Heart left ventricle (tissue), 16 donors: ENCODE measurements at regions of chr7 and their contacts with region 1.

Region 1: GRCh38 chr7:77903597-77903996 is 105.0 kb downstream of the PHTF2 start:
- DNase-seq: peak in 2 of 5 donors; percentile 32 to 37
- ATAC-seq: peak in 1 of 4 donors; percentile 63
- H3K4me3 ChIP-seq: no peak overlapping the region
- H3K27ac ChIP-seq: peak overlapping the region in 1 of 12 donors; percentile 3
- H3K4me1 ChIP-seq: peaks cover 0 to 8% (median 0%) of the 10 kb centered on the region in 12 donors
- H3K27me3 ChIP-seq: no peaks in the 10 kb centered on the region
- CTCF ChIP-seq: peak in 3 of 12 donors; percentile 22 to 31 (median 26)
- POLR2A ChIP-seq: no peak

Region 2: DNA sequence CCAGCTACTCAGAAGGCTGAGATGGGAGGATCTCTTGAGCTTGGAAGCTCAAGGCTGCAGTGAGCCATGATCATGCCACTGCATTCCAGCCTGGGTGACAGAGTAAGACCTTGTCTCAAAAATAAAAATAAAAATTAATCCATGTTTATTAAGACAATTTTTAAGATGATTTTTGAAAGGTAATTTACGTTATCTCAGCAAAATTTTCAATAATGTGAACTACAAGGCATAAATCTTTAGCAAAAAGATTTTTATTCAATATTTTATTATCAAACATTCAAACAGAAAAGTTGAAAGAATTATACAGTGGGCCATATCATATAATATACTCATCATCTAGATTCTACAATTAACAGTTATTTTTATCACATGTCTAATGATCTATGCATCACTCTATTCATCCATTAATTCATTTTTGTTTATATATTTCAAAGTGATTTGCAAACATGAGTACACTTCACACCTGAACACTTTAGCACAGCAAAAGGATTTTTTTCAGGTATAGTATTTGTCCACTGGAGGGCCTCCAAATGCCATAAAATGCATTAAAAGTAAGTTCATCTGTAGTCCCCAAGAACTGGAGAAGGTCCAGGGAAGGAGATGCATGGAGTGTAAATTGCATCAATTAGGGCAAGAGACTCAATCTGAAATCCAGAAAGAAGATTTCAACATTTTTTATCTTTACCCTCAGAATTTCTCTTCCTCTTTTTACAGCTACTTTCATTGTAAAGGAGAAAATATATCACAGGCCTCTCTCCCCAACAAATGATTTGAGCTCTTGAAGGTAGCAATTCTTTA is 246.0 kb before region 1 on chr7:
- intact Hi-C with region 1: loop called in 1 of 10 experiments (anchors 10 kb)
- DNase-seq: no peak
- ATAC-seq: peak in 1 of 4 donors; percentile 32
- H3K4me3 ChIP-seq: no peak overlapping the region
- H3K27ac ChIP-seq: no peak overlapping the region
- H3K4me1 ChIP-seq: peaks cover 0 to 3% (median 0%) of the 10 kb centered on the region in 12 donors
- H3K27me3 ChIP-seq: no peaks in the 10 kb centered on the region
- CTCF ChIP-seq: peak; percentile 19 to 60 (median 46)
- POLR2A ChIP-seq: no peak

Region 3: DNA sequence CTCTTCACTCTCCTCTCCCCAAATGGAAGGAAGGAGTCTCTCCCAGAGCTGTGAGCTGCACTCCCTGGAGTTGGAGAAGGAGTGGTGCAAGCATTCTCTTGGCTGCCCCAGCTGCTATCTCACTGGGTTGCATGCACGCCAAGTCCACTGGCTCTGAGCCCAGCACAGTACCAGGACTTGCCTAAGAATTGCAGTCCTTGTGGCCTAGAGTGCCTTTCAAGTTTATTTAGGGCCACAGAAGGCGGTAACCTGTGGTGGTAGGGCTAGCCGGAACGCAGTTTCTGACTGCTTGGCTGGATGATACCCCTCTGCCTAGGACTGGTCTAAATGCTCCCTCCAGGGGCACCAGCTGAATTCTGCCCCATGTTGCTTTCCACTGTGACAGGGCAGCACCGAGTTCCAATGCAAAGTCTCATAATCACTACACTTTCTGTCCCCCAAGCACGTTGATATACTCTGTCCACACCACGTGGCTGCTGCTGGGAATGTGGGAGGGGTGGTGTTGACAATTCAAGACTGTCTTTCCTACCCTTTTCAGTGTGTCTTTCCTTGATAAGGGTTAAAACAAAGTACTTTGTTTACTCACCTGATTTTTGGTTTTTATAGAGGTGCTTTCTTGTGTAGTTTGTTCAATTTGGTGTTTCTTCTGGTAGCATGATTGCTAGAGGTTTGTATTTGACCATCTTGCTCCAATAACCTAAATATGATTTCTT is 48.1 kb before region 1 on chr7:
- intact Hi-C with region 1: no loop called
- DNase-seq: peak; percentile 15 to 87 (median 76)
- ATAC-seq: peak; percentile 71 to 95 (median 88)
- H3K4me3 ChIP-seq: no peak overlapping the region
- H3K27ac ChIP-seq: peak overlapping the region in 2 of 12 donors; percentile 12
- H3K4me1 ChIP-seq: peaks cover 0 to 30% (median 0%) of the 10 kb centered on the region in 12 donors
- H3K27me3 ChIP-seq: no peaks in the 10 kb centered on the region
- CTCF ChIP-seq: peak in 1 of 12 donors; percentile 22
- POLR2A ChIP-seq: no peak

Region 4: GRCh38 chr7:77960336-77960735 is 56.7 kb after region 1 on chr7:
- intact Hi-C with region 1: no loop called
- DNase-seq: no peak
- ATAC-seq: no peak
- H3K4me3 ChIP-seq: no peak overlapping the region
- H3K27ac ChIP-seq: no peak overlapping the region
- H3K4me1 ChIP-seq: no peaks in the 10 kb centered on the region
- H3K27me3 ChIP-seq: no peaks in the 10 kb centered on the region
- CTCF ChIP-seq: no peak
- POLR2A ChIP-seq: no peak